MCF 10A (cell line): ENCODE measurements at regions of chr5 and their contacts with region 1.

Region 1: GRCh38 chr5:171871711-171872110 is 86.1 kb downstream of the SMIM23 start:
- DNase-seq: no peak
- H3K4me3 Mint-ChIP-seq: no peak overlapping the region
- H3K27ac Mint-ChIP-seq: no peak overlapping the region
- H3K4me1 Mint-ChIP-seq: peaks cover 18% of the 10 kb centered on the region
- H3K27me3 Mint-ChIP-seq: no peaks in the 10 kb centered on the region
- CTCF ChIP-seq: no peak

Region 2: DNA sequence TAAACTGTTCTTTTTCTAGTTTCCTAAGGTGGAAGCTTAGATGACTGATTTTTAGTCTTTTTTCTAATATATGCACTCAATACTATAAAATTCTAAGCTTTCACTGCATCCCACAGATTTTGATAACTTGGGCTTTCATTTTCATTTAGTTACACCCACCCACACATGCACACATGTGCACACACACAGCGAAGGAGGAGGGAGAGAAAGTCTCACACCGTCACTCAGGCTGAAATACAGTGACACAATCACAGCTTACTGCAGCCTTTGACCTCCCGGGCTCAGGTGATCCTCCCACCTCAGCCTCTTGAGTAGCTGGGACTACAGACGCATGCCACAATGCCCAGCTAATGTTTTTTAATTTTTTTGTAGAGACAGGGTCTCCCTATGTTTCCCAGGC is 10.4 kb after region 1 on chr5:
- CTCF ChIA-PET with region 1: interaction called, 10 read pairs
- POLR2A ChIA-PET with region 1: interaction called, 5 read pairs
- intact Hi-C with region 1: no loop called
- DNase-seq: no peak
- H3K4me3 Mint-ChIP-seq: no peak overlapping the region
- H3K27ac Mint-ChIP-seq: no peak overlapping the region
- H3K4me1 Mint-ChIP-seq: peaks cover 4% of the 10 kb centered on the region
- H3K27me3 Mint-ChIP-seq: no peaks in the 10 kb centered on the region
- CTCF ChIP-seq: no peak

Region 3: GRCh38 chr5:171927345-171927941 is 55.7 kb after region 1 on chr5:
- CTCF ChIA-PET with region 1: no interaction called
- POLR2A ChIA-PET with region 1: no interaction called
- intact Hi-C with region 1: no loop called
- DNase-seq: no peak
- H3K4me3 Mint-ChIP-seq: no peak overlapping the region
- H3K27ac Mint-ChIP-seq: no peak overlapping the region
- H3K4me1 Mint-ChIP-seq: peaks cover 15% of the 10 kb centered on the region
- H3K27me3 Mint-ChIP-seq: no peaks in the 10 kb centered on the region
- CTCF ChIP-seq: peak; percentile 44